ENCODE measurements at regions of chrX and their contacts with region 1.

Region 1: DNA sequence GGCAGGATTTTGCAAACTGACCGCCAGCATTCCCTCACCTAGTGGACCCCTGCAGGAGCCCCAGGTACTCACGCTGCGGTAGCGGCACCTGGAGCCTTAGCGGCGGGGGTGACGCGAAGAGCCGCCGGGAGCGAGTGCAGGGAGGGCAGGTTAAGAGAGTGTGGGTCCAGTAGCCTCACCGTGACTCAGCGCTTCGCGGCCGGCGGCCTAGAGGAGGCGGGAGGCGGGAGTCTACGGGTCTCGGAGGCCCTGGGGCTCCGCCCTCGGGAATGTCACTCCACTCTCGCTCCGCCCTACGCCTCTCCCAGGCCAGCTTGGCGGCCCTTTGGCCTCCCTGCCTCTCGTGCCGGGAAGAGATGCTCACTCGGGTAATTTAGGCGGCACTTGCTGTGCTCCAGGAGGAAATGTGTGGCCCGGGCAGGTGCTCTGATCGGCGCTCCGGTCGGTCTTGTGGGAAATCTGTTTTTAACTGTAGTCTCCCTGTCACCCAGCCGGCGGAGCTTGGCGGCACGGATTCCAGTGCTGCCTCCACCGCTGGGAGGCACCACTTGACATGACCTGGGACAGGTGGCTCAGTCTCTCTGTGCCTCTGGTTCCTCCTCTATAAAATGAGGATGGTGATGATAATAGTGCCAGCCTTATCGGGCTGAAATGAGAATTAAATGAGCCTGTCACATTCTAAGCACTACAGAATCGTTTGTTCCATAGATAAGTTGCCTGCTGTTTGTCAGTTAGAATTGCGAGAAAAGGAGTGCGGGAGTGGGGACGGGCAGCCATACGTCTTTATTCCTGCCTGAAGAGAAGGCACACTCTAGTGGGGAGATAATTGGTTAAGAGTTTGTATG is at the start of gene PIR:
- DNase-seq: peak; percentile 85
- H3K4me3 ChIP-seq: peak within 1 kb of the TSS; percentile 58 to 91 (median 66)
- H3K27ac ChIP-seq: peak within 1 kb of the TSS; percentile 78
- H3K4me1 ChIP-seq: peaks cover 48% of the 10 kb centered on the region
- H3K27me3 ChIP-seq: no peaks in the 10 kb centered on the region
- CTCF ChIP-seq: peak; percentile 22 to 48
- POLR2A ChIP-seq: peak; percentile 37
- total RNA-seq, gene PIR: 92.1 and 108 TPM in 2 replicates

Region 2: DNA sequence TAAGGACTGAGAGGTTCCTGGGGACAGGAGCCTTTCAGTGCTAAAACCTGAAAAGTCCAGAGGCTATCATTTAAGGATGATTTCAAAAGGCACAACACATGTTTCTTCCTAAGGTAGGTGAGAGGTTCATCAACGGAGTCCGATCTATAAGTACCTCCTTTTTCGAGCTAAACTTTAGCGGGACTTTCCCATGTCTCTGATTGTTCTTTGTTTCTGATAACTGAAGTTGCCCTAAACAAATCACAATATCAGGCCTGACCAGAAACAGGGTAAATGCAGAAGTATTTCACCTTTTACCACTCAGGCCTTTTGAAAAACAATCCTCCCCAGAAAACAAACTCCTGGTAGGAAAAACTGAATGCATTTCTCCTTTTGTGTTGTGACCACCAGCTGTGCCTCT is 17.9 kb before region 1 on chrX:
- CTCF ChIA-PET with region 1: no interaction called
- POLR2A ChIA-PET with region 1: no interaction called
- dilution Hi-C with region 1: no loop called
- intact Hi-C with region 1: no loop called
- DNase-seq: peak; percentile 41
- H3K4me3 ChIP-seq: no peak overlapping the region
- H3K27ac ChIP-seq: peak overlapping the region; percentile 76
- H3K4me1 ChIP-seq: peaks cover 19% of the 10 kb centered on the region
- H3K27me3 ChIP-seq: no peaks in the 10 kb centered on the region
- CTCF ChIP-seq: no peak
- POLR2A ChIP-seq: no peak

Region 3: DNA sequence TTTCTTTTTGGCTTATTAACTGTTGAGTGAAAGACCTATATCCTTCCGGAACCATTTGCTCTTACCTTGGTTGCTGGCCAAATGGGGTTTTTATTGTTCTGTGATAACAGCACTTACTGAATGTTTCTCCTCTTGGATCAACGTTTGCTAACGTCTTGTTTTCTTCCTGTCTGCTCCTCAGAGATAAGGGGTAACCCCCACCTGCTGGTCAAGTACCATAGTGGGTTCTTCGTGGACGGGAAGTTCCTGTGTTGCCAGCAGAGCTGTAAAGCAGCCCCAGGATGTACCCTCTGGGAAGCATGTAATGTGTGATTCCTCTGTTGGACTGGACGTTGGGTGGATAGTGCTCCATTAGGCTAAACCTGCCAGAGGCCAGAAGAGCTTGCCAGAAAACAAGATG is 22.6 kb after region 1 on chrX:
- CTCF ChIA-PET with region 1: interaction called, 14 read pairs
- POLR2A ChIA-PET with region 1: interaction called, 3 read pairs
- dilution Hi-C with region 1: no loop called
- intact Hi-C with region 1: loop called (anchors 1 kb)
- DNase-seq: peak; percentile 97
- H3K4me3 ChIP-seq: no peak overlapping the region
- H3K27ac ChIP-seq: peak overlapping the region; percentile 91
- H3K4me1 ChIP-seq: peaks cover 77% of the 10 kb centered on the region
- H3K27me3 ChIP-seq: no peaks in the 10 kb centered on the region
- CTCF ChIP-seq: no peak
- POLR2A ChIP-seq: no peak

Region 4: GRCh38 chrX:15549189-15550012 is 56.1 kb after region 1 on chrX:
- CTCF ChIA-PET with region 1: interaction called, 3 read pairs
- POLR2A ChIA-PET with region 1: no interaction called
- dilution Hi-C with region 1: no loop called
- intact Hi-C with region 1: loop called (anchors 5 kb)
- DNase-seq: no peak
- H3K4me3 ChIP-seq: no peak overlapping the region
- H3K27ac ChIP-seq: no peak overlapping the region
- H3K4me1 ChIP-seq: no peaks in the 10 kb centered on the region
- H3K27me3 ChIP-seq: no peaks in the 10 kb centered on the region
- CTCF ChIP-seq: no peak
- POLR2A ChIP-seq: no peak

Region 5: DNA sequence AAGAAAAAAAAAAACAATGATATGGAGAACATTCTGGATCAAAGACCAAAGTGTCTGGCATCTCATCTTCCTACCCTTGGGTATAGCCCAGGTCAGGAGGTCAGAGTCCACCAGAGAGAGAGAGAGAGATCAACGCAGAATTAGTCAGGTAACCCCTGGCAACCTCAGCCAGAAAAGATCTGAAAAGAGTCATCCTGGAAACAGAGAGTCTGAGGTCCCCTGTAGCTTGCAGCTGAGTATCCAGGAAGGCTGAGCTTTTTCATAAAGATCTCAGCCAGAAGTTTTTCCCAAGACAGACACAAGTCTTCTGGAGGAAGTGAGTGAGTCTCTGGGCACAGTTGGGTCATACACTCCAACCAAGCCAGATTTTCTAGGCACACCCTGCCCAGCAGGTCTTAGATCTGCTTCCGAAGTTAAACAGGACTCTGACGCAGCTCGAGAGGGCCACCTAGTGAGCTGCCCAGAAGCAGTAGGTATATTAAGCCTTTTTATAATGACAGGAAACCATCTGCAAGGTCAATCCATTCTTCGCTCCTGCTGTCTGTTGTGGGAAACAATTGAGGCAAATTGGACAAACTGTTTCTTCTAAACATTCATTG is 71.7 kb after region 1 on chrX:
- CTCF ChIA-PET with region 1: interaction called, 22 read pairs
- POLR2A ChIA-PET with region 1: no interaction called
- dilution Hi-C with region 1: no loop called
- intact Hi-C with region 1: loop called (anchors 1 kb)
- DNase-seq: peak; percentile 87
- H3K4me3 ChIP-seq: no peak overlapping the region
- H3K27ac ChIP-seq: peak overlapping the region; percentile 32
- H3K4me1 ChIP-seq: peaks cover 24% of the 10 kb centered on the region
- H3K27me3 ChIP-seq: no peaks in the 10 kb centered on the region
- CTCF ChIP-seq: peak; percentile 51 to 53
- POLR2A ChIP-seq: no peak

Region 6: GRCh38 chrX:15645258-15645657 is 151.9 kb after region 1 on chrX:
- CTCF ChIA-PET with region 1: no interaction called
- POLR2A ChIA-PET with region 1: no interaction called
- dilution Hi-C with region 1: no loop called
- intact Hi-C with region 1: loop called (anchors 5 kb)
- DNase-seq: no peak
- H3K4me3 ChIP-seq: no peak overlapping the region
- H3K27ac ChIP-seq: no peak overlapping the region
- H3K4me1 ChIP-seq: no peaks in the 10 kb centered on the region
- H3K27me3 ChIP-seq: peaks cover 2 to 6% of the 10 kb centered on the region in 2 experiments
- CTCF ChIP-seq: no peak
- POLR2A ChIP-seq: no peak

Region 7: GRCh38 chrX:15674841-15675489 is 181.6 kb after region 1 on chrX:
- CTCF ChIA-PET with region 1: no interaction called
- POLR2A ChIA-PET with region 1: no interaction called
- dilution Hi-C with region 1: no loop called
- intact Hi-C with region 1: loop called (anchors 5 kb)
- DNase-seq: peak; percentile 93
- H3K4me3 ChIP-seq: peak overlapping the region in 2 of 3 experiments; percentile 71 to 78
- H3K27ac ChIP-seq: peak overlapping the region; percentile 48
- H3K4me1 ChIP-seq: peaks cover 12% of the 10 kb centered on the region
- H3K27me3 ChIP-seq: no peaks in the 10 kb centered on the region
- CTCF ChIP-seq: no peak
- POLR2A ChIP-seq: peak; percentile 24

Measured in endothelial cell of umbilical vein (primary cell).